GM10248 (cell line): ENCODE measurements at regions of chr4 and their contacts with region 1.

Region 1: DNA sequence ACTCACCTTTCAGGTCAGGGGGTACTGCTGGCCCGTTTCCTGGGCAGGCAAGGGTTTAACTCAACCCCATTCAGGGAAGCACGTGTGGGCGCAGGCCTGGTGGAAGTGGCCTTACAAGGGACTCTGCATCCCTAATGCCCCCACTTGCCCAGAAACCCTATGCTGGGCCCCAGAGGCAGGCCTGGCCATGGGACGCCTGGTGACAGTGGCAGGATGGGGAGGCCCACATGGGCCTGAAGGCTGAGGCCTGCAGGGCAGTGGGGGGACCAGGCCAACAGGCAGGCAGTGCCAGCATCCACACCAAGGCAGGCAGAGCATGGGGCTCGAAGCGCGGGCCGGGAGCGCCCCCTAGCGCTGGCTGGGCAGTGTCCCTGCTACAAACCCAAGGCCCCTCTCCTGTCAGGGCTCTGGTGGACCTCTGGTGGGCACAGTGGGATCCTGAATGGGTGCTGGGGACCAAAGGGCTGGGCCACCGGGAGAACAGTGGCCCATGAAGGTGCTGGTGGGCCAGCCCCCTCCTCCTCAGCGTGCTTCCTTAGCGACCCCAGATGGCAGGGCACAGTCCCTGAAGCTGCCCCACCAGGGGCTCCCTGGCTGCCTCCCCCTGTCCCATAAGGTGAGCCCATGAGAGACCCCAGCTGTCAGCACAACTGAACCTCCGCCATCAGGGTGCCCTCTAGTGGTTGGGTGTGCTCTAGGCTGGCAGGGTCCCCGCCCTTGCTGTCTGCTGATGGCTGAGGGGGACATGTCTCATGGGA is 16.8 kb downstream of the FGFR3 start:
- DNase-seq: peak; percentile 89
- CTCF ChIP-seq: peak; percentile 95

Region 2: GRCh38 chr4:1171306-1172227 is 638.4 kb before region 1 on chr4:
- CTCF ChIA-PET with region 1: no interaction called
- POLR2A ChIA-PET with region 1: no interaction called
- DNase-seq: peak; percentile 37
- CTCF ChIP-seq: peak; percentile 3

Region 3: DNA sequence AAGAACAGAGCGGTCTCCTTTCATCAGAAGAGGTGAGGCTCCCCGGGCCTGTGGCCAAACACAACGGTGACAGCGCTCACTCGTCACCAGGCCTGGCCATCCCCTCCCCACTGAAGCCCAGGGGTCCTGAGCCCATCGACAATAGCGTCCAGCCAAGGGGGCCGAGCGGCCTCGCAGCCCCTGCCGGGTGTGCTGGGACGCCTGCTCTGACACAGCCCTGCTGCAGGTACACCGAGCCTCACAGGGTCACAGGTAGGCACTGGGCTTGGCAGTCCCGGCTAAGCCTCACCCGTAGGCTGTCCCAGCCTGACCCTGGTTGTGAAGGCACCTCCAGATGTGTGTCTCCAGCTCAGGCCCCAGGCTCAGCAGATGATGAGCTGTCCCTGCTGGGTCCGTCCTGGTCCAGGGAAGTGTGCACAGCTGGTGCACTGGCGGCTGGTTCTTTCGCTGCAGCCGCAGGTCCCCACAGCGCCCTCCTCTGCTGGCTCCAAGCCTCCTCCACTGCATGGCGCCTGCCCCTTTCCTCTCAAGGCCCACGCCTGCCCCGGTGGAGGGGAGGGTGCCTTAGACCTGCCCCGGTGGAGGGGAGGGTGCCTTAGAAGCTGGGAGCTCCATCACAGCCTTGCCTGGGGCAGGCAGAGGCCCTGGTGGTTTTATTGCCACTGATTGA is 441.4 kb before region 1 on chr4:
- CTCF ChIA-PET with region 1: no interaction called
- POLR2A ChIA-PET with region 1: no interaction called
- DNase-seq: no peak
- CTCF ChIP-seq: no peak

Region 4: DNA sequence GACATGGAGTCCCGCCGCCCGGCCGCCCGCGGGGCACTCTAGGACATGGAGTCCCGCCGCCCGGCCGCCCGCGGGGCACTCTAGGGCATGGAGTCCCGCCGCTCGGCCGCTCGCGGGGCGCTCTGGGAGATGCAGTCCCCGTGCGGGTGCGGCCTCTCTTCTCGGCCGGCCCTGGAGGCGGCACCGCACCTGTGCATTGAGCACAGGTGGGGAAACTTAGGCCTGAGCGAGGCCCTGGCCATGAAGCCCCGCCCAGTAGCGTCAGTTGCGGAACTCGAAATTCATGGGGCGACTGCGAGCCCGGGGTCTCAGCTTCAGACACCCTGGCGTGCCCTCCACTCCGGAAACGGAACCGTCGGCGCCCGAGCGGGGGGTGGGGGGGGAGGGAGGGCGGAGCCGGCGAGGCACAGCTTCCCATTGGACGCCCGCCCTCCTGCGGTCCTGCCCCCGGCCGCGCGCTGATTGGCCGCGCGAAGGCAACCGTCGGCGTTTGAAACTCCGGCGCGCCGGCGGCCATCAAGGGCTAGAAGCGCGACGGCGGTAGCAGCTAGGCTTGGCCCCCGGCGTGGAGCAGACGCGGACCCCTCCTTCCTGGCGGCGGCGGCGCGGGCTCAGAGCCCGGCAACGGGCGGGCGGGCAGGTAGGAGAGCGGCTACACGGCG is 88.8 kb before region 1 on chr4 and contains the starts of genes TACC3 and TMEM129:
- CTCF ChIA-PET with region 1: no interaction called
- POLR2A ChIA-PET with region 1: no interaction called
- DNase-seq: peak; percentile 99
- CTCF ChIP-seq: no peak

Region 5: GRCh38 chr4:1771555-1772305 is 38.2 kb before region 1 on chr4:
- CTCF ChIA-PET with region 1: interaction called, 11 read pairs
- POLR2A ChIA-PET with region 1: no interaction called
- DNase-seq: peak; percentile 66
- CTCF ChIP-seq: no peak

Region 6: GRCh38 chr4:1797861-1798579 is 11.9 kb before region 1 on chr4:
- CTCF ChIA-PET with region 1: interaction called, 32 read pairs
- POLR2A ChIA-PET with region 1: no interaction called
- DNase-seq: no peak
- CTCF ChIP-seq: no peak

Region 7: DNA sequence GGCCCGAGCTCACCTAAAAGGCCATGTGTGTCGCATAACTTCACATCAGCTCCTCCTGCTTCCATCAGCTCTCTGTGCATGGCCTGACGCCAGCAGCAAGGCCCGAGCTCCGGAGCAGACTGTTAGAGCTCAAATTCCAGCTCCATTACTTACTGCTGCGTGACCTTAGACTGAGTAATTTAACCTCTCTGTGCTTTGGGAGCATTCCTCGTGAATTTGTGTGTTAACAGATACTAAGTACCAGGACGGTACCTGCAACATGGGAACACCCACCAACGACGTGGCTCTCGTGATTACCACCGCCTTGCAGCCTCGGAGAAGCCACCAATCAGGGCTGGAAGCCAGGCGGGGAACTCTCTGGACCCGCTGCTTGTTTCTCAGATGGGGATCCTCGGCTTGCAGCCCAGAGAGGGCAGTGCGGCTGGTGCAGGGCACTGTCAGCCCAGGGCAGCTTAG is 33.1 kb after region 1 on chr4:
- CTCF ChIA-PET with region 1: interaction called, 12 read pairs
- POLR2A ChIA-PET with region 1: no interaction called
- DNase-seq: no peak
- CTCF ChIP-seq: no peak